HepG2 (cell line): ENCODE measurements at regions of chr6 and their contacts with region 1.

Region 1: GRCh38 chr6:35468181-35468979 is at the start of gene RPL10A:
- DNase-seq: peak; percentile 98
- ATAC-seq: peak; percentile 83
- H3K4me3 ChIP-seq: peak within 1 kb of the TSS; percentile 85 to 98 (median 86)
- H3K27ac ChIP-seq: peak within 1 kb of the TSS; percentile 92
- H3K4me1 ChIP-seq: peaks cover 49% of the 10 kb centered on the region
- H3K27me3 ChIP-seq: no peaks in the 10 kb centered on the region; a peak in 1 of 5 replicates
- CTCF ChIP-seq: peak; percentile 100
- EP300 ChIP-seq: peak in 1 of 2 experiments; percentile 50; a peak in 1 of 4 replicates
- POLR2A ChIP-seq: peak in 1 of 2 experiments; percentile 100; a peak in 2 of 4 replicates
- RAD21 ChIP-seq: peak; percentile 98
- total RNA-seq, gene RPL10A: 1,854 and 2,285 TPM in 2 replicates

Region 2: DNA sequence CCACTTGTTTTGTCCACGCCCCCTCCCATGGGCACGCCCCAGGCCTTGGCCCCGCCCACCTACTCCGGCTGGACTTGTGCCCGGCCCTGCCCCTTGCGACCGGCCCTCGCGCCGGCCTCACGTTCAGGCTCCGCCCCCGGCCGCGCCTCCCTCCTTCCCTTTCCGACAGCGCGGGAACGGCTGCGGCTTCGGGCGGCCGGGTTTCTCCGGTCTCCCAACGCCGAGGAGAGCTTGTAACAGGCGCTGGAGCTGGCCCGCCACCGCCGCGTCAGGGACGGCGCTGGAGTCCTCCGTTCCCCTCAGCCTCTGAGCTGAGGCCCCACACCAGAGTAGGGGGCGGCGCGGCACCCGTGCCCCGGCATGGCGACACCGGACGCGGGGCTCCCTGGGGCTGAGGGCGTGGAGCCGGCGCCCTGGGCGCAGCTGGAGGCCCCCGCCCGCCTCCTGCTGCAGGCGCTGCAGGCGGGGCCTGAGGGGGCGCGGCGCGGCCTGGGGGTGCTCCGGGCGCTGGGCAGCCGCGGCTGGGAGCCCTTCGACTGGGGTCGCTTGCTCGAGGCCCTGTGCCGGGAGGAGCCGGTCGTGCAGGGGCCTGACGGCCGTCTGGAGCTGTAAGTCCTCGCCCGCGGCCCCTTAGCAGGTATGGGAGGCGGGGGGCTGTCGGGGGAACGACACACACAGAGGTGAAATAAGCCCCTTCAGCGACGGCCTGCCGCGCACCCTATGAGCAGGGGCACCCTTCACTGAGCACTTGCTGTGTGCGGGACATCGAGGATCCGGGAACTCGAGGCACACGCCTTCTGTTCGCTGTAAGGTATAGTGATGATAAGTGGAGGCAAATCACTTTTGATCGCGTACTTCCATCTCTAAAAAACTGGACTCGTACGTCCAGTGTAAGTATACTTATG is 15.9 kb before region 1 on chr6 and contains the start of gene FANCE:
- CTCF ChIA-PET with region 1: interaction called, 4 read pairs
- POLR2A ChIA-PET with region 1: interaction called, 15 read pairs
- in situ Hi-C with region 1: no loop called
- intact Hi-C with region 1: loop called (anchors 1 kb)
- DNase-seq: peak; percentile 84
- ATAC-seq: peak; percentile 88
- H3K4me3 ChIP-seq: peak within 1 kb of the TSS; percentile 56 to 79 (median 77)
- H3K27ac ChIP-seq: peak within 1 kb of the TSS; percentile 54
- H3K4me1 ChIP-seq: peaks cover 49% of the 10 kb centered on the region
- H3K27me3 ChIP-seq: peaks cover 3 to 22% of the 10 kb centered on the region in 2 experiments; a peak in 2 of 5 replicates
- CTCF ChIP-seq: peak; percentile 31; the same call in 1 of the 2 replicates
- EP300 ChIP-seq: no peak
- POLR2A ChIP-seq: peak; percentile 31 to 68; a peak in 3 of 4 replicates
- RAD21 ChIP-seq: peak; percentile 62
- total RNA-seq, gene FANCE: 9.7 and 11.2 TPM in 2 replicates

Region 3: DNA sequence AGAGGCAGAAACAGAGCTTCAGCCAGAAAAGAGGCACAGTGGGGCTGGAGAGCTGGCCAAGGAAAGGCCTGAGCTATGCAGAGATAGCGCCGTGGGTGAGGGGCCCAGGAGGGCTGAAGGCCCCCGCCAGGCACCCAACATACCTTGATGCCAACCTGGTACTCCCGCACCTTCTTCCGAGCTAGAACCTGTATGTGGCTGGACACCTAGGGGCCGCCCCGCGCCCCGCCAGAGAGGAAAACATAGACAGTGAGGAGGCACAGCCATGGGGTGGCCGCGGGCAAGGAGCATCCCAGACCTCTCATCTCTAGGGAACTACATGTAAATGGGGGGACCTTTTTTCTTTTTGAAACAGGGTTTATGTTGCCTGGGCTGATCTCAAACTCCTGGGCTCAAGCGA is 11.8 kb after region 1 on chr6:
- CTCF ChIA-PET with region 1: no interaction called
- POLR2A ChIA-PET with region 1: interaction called, 15 read pairs
- in situ Hi-C with region 1: no loop called
- intact Hi-C with region 1: no loop called
- DNase-seq: no peak
- ATAC-seq: no peak
- H3K4me3 ChIP-seq: no peak overlapping the region
- H3K27ac ChIP-seq: no peak overlapping the region
- H3K4me1 ChIP-seq: peaks cover 13% of the 10 kb centered on the region
- H3K27me3 ChIP-seq: no peaks in the 10 kb centered on the region
- CTCF ChIP-seq: no peak
- EP300 ChIP-seq: no peak
- POLR2A ChIP-seq: no peak
- RAD21 ChIP-seq: no peak

Region 4: DNA sequence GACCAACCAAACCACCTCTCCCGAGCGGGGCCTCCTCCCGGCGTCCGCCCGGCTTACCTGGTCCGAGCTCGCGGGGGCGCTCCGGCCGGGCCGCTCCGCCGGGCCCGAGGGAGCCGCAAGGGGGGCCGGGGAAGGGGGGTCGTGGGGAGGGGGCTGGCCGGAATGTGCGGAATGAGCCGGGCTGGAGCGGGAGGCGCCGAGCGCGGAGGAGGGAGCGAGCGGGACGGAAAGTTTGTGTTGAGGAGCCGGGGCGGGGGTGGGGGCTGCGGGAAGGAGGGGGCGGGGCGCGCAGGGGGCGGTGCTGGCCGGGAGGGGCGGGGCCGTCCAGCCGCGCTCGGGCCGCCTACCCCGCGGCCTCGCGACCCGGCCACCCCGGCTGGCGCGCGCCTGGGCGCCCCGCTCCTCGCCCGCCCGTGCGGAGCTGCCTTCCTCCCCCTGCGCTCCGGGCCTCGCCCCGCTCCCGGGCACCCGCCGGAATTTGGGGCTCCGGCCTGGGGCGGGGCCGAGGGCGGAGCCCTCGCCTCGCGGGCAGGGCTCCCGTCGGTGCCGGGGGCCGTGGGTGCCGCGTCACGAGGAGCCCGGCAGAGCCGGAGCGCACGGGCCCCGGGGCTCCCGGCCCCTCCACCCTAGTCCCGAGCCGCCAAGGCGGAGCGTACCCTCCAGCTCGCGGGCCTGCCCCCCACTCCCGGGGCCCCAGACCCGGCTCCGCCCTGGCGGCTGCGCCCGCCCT is 28.6 kb after region 1 on chr6 and contains the start of gene TEAD3:
- CTCF ChIA-PET with region 1: no interaction called
- POLR2A ChIA-PET with region 1: interaction called, 88 read pairs
- in situ Hi-C with region 1: no loop called
- intact Hi-C with region 1: no loop called
- DNase-seq: peak; percentile 69
- ATAC-seq: peak; percentile 47
- H3K4me3 ChIP-seq: peak within 1 kb of the TSS; percentile 81 to 95 (median 94)
- H3K27ac ChIP-seq: peak within 1 kb of the TSS; percentile 84
- H3K4me1 ChIP-seq: peaks cover 63% of the 10 kb centered on the region
- H3K27me3 ChIP-seq: peaks cover 6 to 31% of the 10 kb centered on the region in 2 experiments; a peak in 4 of 5 replicates
- CTCF ChIP-seq: peak; percentile 41
- EP300 ChIP-seq: no peak
- POLR2A ChIP-seq: 0 out of 4 replicates have a peak, but pooled peaks of 1 of the 2 experiments have one; percentile 39
- RAD21 ChIP-seq: peak; percentile 43
- total RNA-seq, gene TEAD3: 14.4 and 15.1 TPM in 2 replicates